Aorta (tissue), 5 donors: ENCODE measurements at regions of chr2 and their contacts with region 1.

Region 1: DNA sequence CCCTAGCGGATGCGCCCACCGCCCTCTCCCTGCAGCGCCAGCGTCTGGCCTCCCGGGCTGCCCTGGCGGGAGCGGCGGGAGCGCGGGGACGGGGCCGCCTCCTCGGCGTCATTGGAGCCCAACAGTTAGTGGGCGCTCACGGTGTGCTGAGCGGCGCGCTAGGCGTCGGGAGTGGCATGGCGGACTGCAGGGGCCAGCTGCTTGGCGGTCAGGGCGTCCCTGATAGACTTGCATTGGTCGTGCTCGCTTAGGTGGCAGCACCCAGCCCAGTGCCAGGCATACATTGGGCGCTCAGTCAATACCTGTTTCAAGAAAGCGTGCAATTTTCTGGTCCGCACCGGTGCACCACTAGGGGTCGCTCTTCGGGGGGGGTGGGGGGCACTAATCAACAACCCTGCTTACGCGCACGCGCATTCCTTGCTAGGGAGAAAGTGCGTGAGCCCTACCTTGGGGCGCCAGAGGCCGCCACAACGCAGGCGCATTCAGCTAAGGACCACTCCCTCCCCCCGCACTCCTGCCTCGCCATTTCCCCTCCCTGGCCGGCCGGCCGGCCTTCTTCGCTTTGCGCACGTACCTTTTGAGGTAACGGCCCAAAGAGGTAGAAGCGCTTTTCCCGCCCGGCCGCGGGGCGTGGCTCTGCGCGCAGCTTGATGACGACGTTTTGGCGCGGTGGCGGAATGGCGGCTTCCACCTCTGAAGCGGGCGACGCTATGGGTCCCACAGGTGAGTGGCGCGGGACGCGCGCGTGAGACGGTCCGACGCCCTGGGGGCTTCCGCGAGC is 411 bp upstream of the MZT2A start:
- DNase-seq: peak; percentile 94 to 96
- ATAC-seq: peak; percentile 92
- H3K4me3 ChIP-seq: peak overlapping the region; percentile 68 to 80
- H3K27ac ChIP-seq: peak overlapping the region in 1 of 2 donors; percentile 60
- H3K4me1 ChIP-seq: peaks cover 0 to 1% of the 10 kb centered on the region in 2 donors
- H3K27me3 ChIP-seq: no peaks in the 10 kb centered on the region

Region 2: GRCh38 chr2:130181325-130181879 is 1311.2 kb before region 1 on chr2 and contains the start of gene SMPD4:
- intact Hi-C with region 1: loop called in 1 of 2 experiments (anchors 10 kb)
- DNase-seq: peak; percentile 99 to 100
- ATAC-seq: peak; percentile 98
- H3K4me3 ChIP-seq: peak within 1 kb of the TSS; percentile 77 to 92
- H3K27ac ChIP-seq: peak within 1 kb of the TSS; percentile 22 to 57
- H3K4me1 ChIP-seq: no peaks in the 10 kb centered on the region
- H3K27me3 ChIP-seq: no peaks in the 10 kb centered on the region
- total RNA-seq, gene SMPD4: 32.3 to 37.4 TPM

Region 3: GRCh38 chr2:131105156-131105949 is 387.3 kb before region 1 on chr2 and contains the start of gene PLEKHB2:
- intact Hi-C with region 1: loop called in 1 of 2 experiments (anchors 10 kb)
- DNase-seq: peak; percentile 95 to 98
- ATAC-seq: peak; percentile 97
- H3K4me3 ChIP-seq: peak within 1 kb of the TSS; percentile 91 to 97
- H3K27ac ChIP-seq: peak within 1 kb of the TSS; percentile 80 to 97
- H3K4me1 ChIP-seq: no peaks in the 10 kb centered on the region
- H3K27me3 ChIP-seq: no peaks in the 10 kb centered on the region
- total RNA-seq, gene PLEKHB2: 23.8 to 41.3 TPM